Activated B cell treated with CpG ODN at 0.5 μM for 24 hours (primary cell): ENCODE measurements at regions of chr3 and their contacts with region 1.

Region 1: GRCh38 chr3:4466741-4467521 is at the start of gene SUMF1:
- DNase-seq: peak; percentile 70
- ATAC-seq: peak; percentile 94
- H3K4me3 Mint-ChIP-seq: peak within 1 kb of the TSS; percentile 93
- H3K27ac Mint-ChIP-seq: peak within 1 kb of the TSS; percentile 96
- H3K4me1 Mint-ChIP-seq: peaks cover 16% of the 10 kb centered on the region
- H3K27me3 Mint-ChIP-seq: no peaks in the 10 kb centered on the region
- CTCF ChIP-seq: no peak
- total RNA-seq, gene SUMF1: 18.4 and 20.7 TPM in 2 replicates

Region 2: GRCh38 chr3:4303187-4304123 is 163.5 kb before region 1 on chr3 and contains the start of gene SETMAR:
- CTCF ChIA-PET with region 1: no interaction called
- POLR2A ChIA-PET with region 1: no interaction called
- intact Hi-C with region 1: loop called (anchors 2 kb)
- DNase-seq: peak; percentile 77
- ATAC-seq: peak; percentile 96
- H3K4me3 Mint-ChIP-seq: peak within 1 kb of the TSS; percentile 98
- H3K27ac Mint-ChIP-seq: peak within 1 kb of the TSS; percentile 98
- H3K4me1 Mint-ChIP-seq: peaks cover 11% of the 10 kb centered on the region
- H3K27me3 Mint-ChIP-seq: no peaks in the 10 kb centered on the region
- CTCF ChIP-seq: no peak
- total RNA-seq, gene SETMAR: 10.3 and 11.4 TPM in 2 replicates

Region 3: DNA sequence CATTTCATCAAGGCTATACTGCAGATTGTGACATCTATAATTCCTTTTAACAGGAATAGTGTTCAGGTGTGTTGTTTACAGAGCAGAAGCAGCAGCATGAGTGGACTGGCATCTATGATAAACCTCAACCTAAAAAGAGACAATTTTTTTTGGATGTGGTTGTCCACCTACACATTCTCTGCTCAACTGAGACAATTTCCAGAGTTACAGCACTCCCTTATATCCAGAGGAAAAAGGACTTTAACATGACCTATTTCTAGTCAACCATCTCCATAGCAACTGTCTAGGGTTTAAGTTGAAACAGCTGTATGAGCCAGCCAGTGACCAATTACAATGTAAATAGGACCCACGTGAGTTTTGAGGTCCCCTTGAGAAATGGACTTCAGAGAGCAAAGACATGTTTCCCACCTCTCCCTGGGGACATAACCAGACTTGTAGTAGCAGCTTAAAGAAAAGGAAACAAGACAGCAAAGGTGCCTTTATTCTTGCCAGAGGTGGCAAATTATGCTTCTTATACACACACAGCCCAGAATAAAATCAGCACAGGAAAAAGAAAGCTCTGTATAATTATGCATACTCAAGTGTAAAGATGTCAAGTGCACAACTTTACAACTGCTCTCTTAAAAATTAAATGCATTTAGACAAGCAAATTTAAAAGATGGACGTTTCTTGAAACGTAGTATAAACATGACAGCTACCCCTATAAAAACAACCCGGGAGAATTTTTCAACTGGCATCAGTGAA is 40.2 kb before region 1 on chr3:
- CTCF ChIA-PET with region 1: no interaction called
- POLR2A ChIA-PET with region 1: no interaction called
- intact Hi-C with region 1: loop called (anchors 2 kb)
- DNase-seq: no peak
- ATAC-seq: peak; percentile 58
- H3K4me3 Mint-ChIP-seq: no peak overlapping the region
- H3K27ac Mint-ChIP-seq: peak overlapping the region; percentile 57
- H3K4me1 Mint-ChIP-seq: peaks cover 21% of the 10 kb centered on the region
- H3K27me3 Mint-ChIP-seq: no peaks in the 10 kb centered on the region
- CTCF ChIP-seq: no peak